Panc1 (cell line): ENCODE measurements at regions of chr17 and their contacts with region 1.

Region 1: GRCh38 chr17:40382251-40382650 is 17.7 kb upstream of the GJD3 start:
- DNase-seq: no peak
- ATAC-seq: no peak
- H3K4me3 ChIP-seq: no peak overlapping the region
- H3K27ac ChIP-seq: no peak overlapping the region
- H3K4me1 ChIP-seq: no peaks in the 10 kb centered on the region
- H3K27me3 ChIP-seq: no peaks in the 10 kb centered on the region
- CTCF ChIP-seq: no peak

Region 2: GRCh38 chr17:40177275-40177874 is 204.9 kb before region 1 on chr17 and contains the start of gene RAPGEFL1:
- CTCF ChIA-PET with region 1: no interaction called
- POLR2A ChIA-PET with region 1: no interaction called
- in situ Hi-C with region 1: no loop called
- intact Hi-C with region 1: no loop called
- DNase-seq: no peak
- ATAC-seq: peak; percentile 72
- H3K4me3 ChIP-seq: peak within 1 kb of the TSS in 1 of 2 experiments; percentile 16; a peak in 1 of 4 replicates
- H3K27ac ChIP-seq: no peak within 1 kb of the TSS
- H3K4me1 ChIP-seq: peaks cover 12% of the 10 kb centered on the region
- H3K27me3 ChIP-seq: no peaks in the 10 kb centered on the region
- CTCF ChIP-seq: no peak
- total RNA-seq, gene RAPGEFL1: 6.5 TPM

Region 3: GRCh38 chr17:40362696-40363110 is 19.5 kb before region 1 on chr17:
- CTCF ChIA-PET with region 1: interaction called, 4 read pairs
- POLR2A ChIA-PET with region 1: interaction called, 18 read pairs
- in situ Hi-C with region 1: no loop called
- intact Hi-C with region 1: no loop called
- DNase-seq: no peak
- ATAC-seq: peak; percentile 87
- H3K4me3 ChIP-seq: peak overlapping the region; percentile 50 to 55
- H3K27ac ChIP-seq: no peak overlapping the region
- H3K4me1 ChIP-seq: peaks cover 7% of the 10 kb centered on the region; the same call in 1 of the 2 replicates
- H3K27me3 ChIP-seq: no peaks in the 10 kb centered on the region
- CTCF ChIP-seq: peak; percentile 93